ENCODE measurements at regions of chr12 and their contacts with region 1.

Region 1: GRCh38 chr12:65823513-65824375 is 539 bp upstream of the HMGA2 start:
- DNase-seq: peak; percentile 71
- ATAC-seq: peak; percentile 26

Region 2: DNA sequence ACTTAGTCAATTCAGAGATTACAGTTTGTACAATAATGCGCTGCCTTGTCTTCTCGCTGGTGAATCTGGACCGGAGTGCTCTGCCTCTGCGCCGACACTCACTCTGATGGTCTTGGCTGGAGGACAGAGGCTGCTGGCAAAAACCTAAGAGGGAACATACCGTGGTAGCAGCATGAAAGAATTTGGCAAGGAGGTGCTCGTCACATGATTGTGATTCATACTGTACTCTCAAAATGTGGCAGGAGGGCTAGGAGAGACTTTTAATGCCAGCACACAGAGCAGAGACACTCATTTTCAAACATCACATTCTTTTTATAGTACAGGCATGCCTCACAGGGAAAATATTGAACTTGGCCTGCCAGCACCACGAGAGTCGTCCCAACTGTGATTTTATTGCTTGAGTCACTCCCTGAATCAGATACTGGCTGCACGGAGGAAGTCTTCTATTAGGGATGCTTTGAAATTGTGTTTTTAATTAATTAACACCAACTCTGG is 68.3 kb after region 1 on chr12:
- intact Hi-C with region 1: no loop called
- DNase-seq: peak; percentile 62
- ATAC-seq: peak; percentile 97

Region 3: DNA sequence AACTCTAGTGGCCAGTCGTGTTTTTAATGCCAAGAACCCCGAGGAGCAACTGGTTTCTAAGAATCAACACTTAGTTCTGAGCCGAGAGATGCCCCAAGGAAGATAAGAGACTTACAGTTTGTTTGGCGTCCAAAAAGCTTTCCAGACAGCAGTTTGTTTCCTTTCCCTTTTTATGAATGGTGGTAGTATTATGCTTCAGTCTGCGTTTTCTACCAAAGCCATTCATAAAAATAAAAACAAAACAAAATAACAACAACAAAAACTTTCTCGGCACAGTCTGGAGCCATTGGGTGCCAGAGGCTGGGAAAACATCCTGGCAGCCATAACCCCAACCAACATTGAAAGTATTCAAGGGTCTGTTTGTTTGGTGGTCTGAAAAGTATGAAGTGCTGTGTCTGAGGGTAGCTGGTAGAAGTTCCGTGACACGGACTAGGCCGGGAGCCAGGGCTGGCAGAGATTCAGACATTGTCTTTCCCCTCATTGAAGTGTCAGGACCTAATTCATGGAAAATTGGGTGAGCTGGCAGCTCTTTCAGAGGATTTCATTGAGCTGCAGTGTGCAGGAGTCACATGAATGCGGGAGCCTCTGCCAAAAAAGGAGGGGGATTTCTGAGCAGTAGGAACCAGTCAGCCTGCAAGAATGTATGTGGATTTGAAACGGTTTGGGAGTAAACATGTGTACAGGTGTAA is 124.7 kb after region 1 on chr12:
- intact Hi-C with region 1: loop called (anchors 10 kb)
- DNase-seq: peak; percentile 60
- ATAC-seq: peak; percentile 31

Region 4: DNA sequence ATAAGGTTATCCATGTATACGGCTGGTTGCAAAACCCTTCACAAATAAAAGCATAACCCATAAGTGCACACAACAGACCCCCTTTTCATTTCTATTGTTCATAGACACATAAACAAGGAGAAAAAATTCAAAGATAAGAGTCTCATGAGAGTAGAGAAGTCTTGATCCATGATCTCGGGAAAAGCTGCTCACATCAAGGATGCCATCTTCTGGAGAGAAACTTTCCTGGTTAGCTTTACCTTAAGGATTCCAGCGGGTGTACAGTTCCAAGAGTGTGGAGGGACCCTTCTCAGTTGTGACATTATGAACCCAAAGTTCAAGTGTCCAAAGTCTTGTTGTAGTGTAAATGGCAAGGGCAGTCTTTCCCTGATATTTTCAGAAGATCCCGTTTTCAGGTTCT is 162.3 kb after region 1 on chr12:
- intact Hi-C with region 1: loop called (anchors 10 kb)
- DNase-seq: no peak
- ATAC-seq: no peak

Measured in Right ventricle myocardium inferior (tissue), 1 donor.